ENCODE measurements at regions of chr3 and their contacts with region 1.

Region 1: GRCh38 chr3:61505197-61505596 is 56.2 kb upstream of the PTPRG start:
- DNase-seq: no peak
- ATAC-seq: no peak
- H3K4me3 ChIP-seq: no peak overlapping the region
- H3K27ac ChIP-seq: no peak overlapping the region
- H3K4me1 ChIP-seq: no peaks in the 10 kb centered on the region
- H3K27me3 ChIP-seq: no peaks in the 10 kb centered on the region
- CTCF ChIP-seq: no peak
- EP300 ChIP-seq: no peak
- POLR2A ChIP-seq: no peak
- RAD21 ChIP-seq: no peak

Region 2: DNA sequence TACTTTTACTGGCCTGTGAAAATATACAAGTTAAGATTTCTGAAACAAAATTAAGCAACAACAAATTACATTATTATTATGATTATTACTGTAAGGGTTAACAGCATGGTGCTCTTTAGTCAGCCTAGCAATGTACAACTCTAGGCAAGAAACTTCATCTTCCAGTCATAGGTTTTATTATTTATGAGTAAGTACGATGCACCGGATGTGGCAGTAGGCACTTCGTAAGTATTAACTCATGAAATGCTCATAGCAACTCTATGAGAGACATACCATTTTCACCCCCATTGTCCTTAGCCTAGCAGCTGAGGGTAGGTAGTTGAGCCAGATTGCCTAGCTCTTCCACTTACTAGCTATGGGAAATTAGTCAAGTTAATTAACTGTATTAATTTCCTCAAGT is 11.9 kb before region 1 on chr3:
- CTCF ChIA-PET with region 1: interaction called, 4 read pairs
- POLR2A ChIA-PET with region 1: interaction called, 4 read pairs
- RAD21 ChIA-PET with region 1: interaction called, 4 read pairs
- SMC1A ChIA-PET with region 1: interaction called, 13 read pairs
- in situ Hi-C with region 1: no loop called
- intact Hi-C with region 1: no loop called
- DNase-seq: no peak
- ATAC-seq: no peak
- H3K4me3 ChIP-seq: no peak overlapping the region
- H3K27ac ChIP-seq: no peak overlapping the region
- H3K4me1 ChIP-seq: no peaks in the 10 kb centered on the region
- H3K27me3 ChIP-seq: no peaks in the 10 kb centered on the region; a peak in 1 of 4 replicates
- CTCF ChIP-seq: no peak
- EP300 ChIP-seq: no peak
- POLR2A ChIP-seq: no peak
- RAD21 ChIP-seq: no peak